ENCODE measurements at regions of chr17 and their contacts with region 1.

Region 1: DNA sequence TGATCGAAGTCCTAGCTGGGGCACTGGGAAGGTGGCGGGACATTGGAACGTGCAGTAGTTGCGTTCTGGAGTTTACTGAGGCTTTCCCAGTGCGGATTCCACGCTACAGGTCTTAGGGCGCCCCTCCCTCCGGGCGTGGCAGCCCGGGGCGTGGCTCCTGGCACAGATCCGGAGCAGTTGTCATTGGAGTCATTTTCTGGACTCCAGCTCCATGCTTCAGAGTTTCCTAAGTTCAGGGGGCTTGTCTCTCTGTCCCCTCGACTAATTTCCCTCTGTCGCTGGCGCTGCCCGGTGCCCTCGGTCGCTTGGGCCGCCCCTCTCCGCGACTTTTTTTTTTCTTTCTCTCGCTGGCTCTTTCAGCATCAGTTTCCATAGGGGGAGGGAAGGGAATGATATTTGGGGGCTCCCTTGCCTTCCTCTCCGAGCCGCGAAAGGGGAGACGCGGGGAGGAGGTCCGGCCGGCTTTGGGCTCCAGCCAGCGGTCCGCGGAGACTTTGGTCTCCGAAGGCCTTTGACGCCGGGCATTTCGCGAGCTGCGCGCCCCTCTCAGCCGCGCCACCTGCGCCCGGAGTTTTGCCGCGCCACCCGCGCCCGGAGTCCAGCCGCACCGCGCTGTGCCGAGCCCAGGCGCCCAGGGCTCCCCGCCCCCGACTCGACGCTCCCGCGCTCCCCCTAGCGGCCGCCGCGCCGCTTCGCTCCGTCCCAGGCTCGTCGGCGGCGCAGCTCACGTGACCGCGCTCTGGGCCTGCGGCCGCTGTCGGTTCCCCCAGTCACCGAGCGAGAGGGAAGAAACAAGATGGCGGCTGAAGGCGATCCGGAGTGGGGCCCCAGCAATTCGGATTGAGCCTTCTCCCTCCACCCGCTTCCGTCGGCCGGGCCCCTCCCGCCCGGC is at the start of gene BPTF:
- DNase-seq: peak; percentile 83 to 87
- ATAC-seq: peak; percentile 89 to 90
- H3K4me3 ChIP-seq: peak within 1 kb of the TSS; percentile 88 to 99 (median 90)
- H3K27ac ChIP-seq: peak within 1 kb of the TSS; percentile 88 to 91 (median 90)
- H3K4me1 ChIP-seq: peaks cover 32 to 34% of the 10 kb centered on the region in 2 donors
- H3K27me3 ChIP-seq: no peaks in the 10 kb centered on the region
- CTCF ChIP-seq: peak; percentile 76 to 99 (median 98)
- POLR2A ChIP-seq: peak; percentile 51 to 63
- total RNA-seq, gene BPTF: 29.3 to 43.9 (median 38.1) TPM

Region 2: DNA sequence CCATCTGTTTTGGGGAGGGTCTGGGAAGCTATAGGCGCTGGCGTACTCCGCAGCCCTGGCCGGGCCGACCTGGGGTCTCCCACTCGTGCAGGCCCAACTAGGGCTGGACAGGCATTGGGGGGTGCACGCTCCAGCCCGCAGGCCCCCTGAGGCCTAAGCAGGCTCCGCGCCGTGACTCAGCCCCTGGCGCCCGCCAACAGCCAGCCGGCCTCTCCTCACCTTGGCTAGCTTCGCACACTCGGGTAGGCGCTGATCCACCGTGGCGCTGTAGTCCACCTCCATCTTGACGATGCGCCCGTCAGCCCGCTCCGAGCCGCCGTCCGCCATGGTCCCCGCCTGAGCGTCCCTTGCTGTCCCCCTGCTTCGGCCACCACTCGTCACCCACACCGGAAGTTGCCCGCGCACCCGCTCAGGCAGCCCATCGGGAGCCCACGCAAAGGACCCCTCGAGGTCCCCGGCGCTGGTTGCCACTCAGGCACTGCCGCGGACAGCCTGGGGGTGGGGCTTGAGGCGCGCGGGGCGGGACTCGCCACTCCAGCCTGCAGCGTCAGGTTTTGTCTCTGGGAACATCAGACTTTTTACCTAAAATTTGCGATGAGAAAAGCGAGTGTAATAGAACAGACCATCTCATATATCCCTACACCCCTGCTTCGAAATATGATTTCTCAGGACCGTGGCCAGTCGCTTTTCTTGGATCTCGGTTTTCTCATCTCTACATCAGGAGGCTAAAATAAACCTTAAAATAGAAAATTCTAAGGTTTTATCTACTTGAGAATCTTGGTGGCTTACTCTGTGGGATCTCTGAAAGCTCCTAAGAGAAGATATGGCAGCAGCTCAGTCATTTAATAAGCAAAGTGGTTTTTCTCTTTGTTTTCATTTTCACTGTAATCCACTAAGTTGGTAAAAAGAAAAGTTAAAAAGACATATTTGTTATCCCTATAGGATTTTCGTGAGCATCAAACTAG is 458.5 kb before region 1 on chr17 and contains the start of gene PSMD12:
- in situ Hi-C with region 1: loop called in 1 of 4 experiments (anchors 25 kb)
- intact Hi-C with region 1: no loop called
- DNase-seq: peak; percentile 92 to 93
- ATAC-seq: peak; percentile 85 to 90
- H3K4me3 ChIP-seq: peak within 1 kb of the TSS; percentile 72 to 98 (median 95)
- H3K27ac ChIP-seq: peak within 1 kb of the TSS; percentile 97 to 99 (median 97)
- H3K4me1 ChIP-seq: peaks cover 38 to 39% of the 10 kb centered on the region in 2 donors
- H3K27me3 ChIP-seq: no peaks in the 10 kb centered on the region
- CTCF ChIP-seq: peak in 1 of 5 experiments; percentile 28
- POLR2A ChIP-seq: peak; percentile 95 to 98
- total RNA-seq, gene PSMD12: 52.0 to 89.6 (median 69.9) TPM

Region 3: DNA sequence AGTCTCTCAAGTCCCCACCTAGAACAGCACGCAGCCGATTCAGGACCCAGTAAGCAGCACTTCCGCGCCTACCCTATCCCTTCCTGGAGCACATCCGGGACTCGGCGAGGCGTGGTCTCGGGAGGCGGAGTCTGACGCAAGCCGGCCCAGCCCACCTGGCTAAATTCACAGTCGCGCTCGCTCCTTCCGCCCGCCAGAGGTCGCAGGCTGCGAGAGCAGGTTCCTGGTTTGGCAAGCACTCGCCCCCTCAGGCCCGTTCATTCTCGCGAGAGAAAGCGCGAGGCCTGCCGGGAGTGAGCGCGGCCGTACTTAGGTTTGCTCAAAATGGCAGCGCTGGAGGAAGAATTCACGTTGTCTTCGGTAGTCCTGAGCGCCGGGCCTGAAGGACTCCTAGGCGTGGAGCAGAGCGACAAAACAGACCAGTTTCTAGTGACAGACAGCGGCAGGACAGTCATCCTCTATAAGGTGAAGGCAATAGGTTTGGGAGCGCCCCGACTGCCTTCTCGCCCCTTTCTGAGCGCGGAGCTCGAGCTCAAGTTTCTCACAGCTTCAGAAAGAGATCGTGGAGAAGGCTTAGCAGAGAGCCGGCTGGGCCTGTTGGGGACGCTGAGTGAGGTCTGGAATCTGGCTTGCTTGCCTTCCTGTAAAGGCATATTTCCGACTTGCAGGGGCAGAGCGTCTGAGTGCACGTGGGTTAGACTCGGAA is 107.2 kb before region 1 on chr17 and contains the start of gene NOL11:
- in situ Hi-C with region 1: loop called in 3 of 4 experiments (anchors 5 to 10 kb)
- intact Hi-C with region 1: loop called (anchors 1 kb)
- DNase-seq: peak; percentile 97 to 98
- ATAC-seq: peak; percentile 98
- H3K4me3 ChIP-seq: peak within 1 kb of the TSS; percentile 68 to 98 (median 78)
- H3K27ac ChIP-seq: peak within 1 kb of the TSS; percentile 83 to 92 (median 86)
- H3K4me1 ChIP-seq: peaks cover 20 to 23% of the 10 kb centered on the region in 2 donors
- H3K27me3 ChIP-seq: no peaks in the 10 kb centered on the region
- CTCF ChIP-seq: peak; percentile 89 to 98 (median 93)
- POLR2A ChIP-seq: peak; percentile 63 to 71
- total RNA-seq, gene NOL11: 22.2 to 40.9 (median 36.4) TPM

Region 4: DNA sequence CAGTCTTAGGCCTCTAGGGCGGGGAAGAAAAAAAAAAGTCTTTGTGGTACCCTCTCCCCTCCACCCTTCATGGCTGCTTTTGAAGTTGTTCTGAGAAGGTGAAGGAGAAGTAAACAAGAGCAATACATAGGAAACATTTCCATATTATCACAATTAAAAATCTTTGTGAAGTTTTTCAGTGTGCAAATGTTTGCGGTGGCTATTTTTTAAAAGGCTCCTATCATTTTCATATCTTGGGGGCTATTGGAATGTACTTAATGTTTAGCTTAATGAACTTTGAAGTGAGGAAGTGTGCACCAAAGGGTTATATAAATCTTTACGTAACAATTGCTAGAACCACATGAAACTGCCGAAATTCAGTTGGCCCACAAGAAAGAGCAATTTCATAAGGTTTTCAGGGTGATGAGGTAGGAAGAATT is 99.6 kb before region 1 on chr17:
- in situ Hi-C with region 1: loop called in 1 of 4 experiments (anchors 10 kb)
- intact Hi-C with region 1: no loop called
- DNase-seq: no peak
- ATAC-seq: no peak
- H3K4me3 ChIP-seq: no peak overlapping the region
- H3K27ac ChIP-seq: no peak overlapping the region
- H3K4me1 ChIP-seq: no peaks in the 10 kb centered on the region
- H3K27me3 ChIP-seq: no peaks in the 10 kb centered on the region
- CTCF ChIP-seq: no peak
- POLR2A ChIP-seq: no peak

Region 5: DNA sequence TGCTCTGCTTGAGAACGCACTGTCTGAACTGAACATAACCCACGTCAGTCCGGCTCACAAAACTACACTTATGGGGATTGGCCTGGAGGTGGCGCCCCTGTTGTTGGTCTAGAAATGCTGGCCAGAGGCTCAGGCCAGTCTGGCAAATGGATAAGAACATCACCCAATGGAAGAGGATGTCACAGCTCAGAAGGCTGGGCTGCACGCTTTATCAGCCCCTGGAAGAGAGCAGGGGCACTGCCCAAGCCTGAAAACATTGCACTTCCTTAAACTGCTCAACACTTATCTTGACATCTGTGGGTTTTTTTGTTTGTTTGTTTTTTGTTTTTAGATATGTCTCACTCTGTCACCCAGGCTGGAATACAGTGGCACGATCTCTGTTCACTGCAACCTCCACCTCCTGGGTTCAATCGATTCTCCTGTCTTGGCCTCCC is 24.5 kb before region 1 on chr17:
- in situ Hi-C with region 1: no loop called
- intact Hi-C with region 1: loop called (anchors 1 kb)
- DNase-seq: peak; percentile 61 to 70
- ATAC-seq: peak; percentile 94
- H3K4me3 ChIP-seq: no peak overlapping the region
- H3K27ac ChIP-seq: no peak overlapping the region
- H3K4me1 ChIP-seq: no peaks in the 10 kb centered on the region
- H3K27me3 ChIP-seq: no peaks in the 10 kb centered on the region
- CTCF ChIP-seq: peak; percentile 16 to 66 (median 62)
- POLR2A ChIP-seq: no peak